ENCODE measurements at regions of chr15 and their contacts with region 1.

Region 1: GRCh38 chr15:59372352-59373211 is at the start of gene MYO1E:
- DNase-seq: peak; percentile 97
- H3K4me3 ChIP-seq: peak within 1 kb of the TSS; percentile 88 to 92
- H3K27ac ChIP-seq: peak within 1 kb of the TSS; percentile 93 to 98
- H3K4me1 ChIP-seq: no peaks in the 10 kb centered on the region
- H3K27me3 ChIP-seq: no peaks in the 10 kb centered on the region
- CTCF ChIP-seq: no peak
- POLR2A ChIP-seq: peak; percentile 98
- total RNA-seq, gene MYO1E: 66.3 to 92.0 TPM

Region 2: DNA sequence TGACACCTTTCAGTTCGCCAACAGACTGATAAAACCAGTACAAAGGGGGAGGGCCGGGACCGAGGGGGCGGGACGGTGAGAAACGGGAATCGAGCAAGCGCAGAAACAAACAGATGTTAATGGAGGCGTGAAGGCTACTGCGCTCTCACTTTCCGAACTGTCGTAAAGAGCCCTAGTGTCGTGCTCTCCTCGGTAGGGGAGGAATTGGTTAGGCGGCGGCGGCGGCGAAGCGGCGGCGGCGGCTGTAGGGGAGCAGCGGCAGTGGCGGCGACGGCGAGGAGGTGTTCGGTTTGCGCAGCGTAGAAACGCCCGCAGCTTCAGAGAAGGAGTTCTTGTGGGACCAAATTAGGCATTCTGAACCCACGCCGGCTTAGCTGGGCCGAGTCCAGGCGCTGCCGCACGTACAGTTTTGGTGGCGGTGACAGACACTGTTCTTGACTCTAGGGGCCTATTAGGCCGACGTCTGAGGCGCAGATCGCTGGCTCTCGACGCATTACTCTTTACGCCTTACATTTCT is 385.0 kb before region 1 on chr15 and contains the start of gene RNF111:
- intact Hi-C with region 1: loop called (anchors 5 kb)
- DNase-seq: peak; percentile 91
- H3K4me3 ChIP-seq: peak within 1 kb of the TSS; percentile 79 to 94
- H3K27ac ChIP-seq: peak within 1 kb of the TSS; percentile 90 to 96
- H3K4me1 ChIP-seq: peaks cover 8% of the 10 kb centered on the region
- H3K27me3 ChIP-seq: no peaks in the 10 kb centered on the region
- CTCF ChIP-seq: peak in 1 of 4 experiments; percentile 8
- POLR2A ChIP-seq: peak; percentile 77
- total RNA-seq, gene RNF111: 15.4 to 22.5 TPM

Region 3: GRCh38 chr15:59221511-59222505 is 150.8 kb before region 1 on chr15:
- intact Hi-C with region 1: no loop called
- DNase-seq: no peak
- H3K4me3 ChIP-seq: no peak overlapping the region
- H3K27ac ChIP-seq: no peak overlapping the region
- H3K4me1 ChIP-seq: no peaks in the 10 kb centered on the region
- H3K27me3 ChIP-seq: no peaks in the 10 kb centered on the region
- CTCF ChIP-seq: no peak
- POLR2A ChIP-seq: no peak

Region 4: GRCh38 chr15:59247364-59247763 is 125.2 kb before region 1 on chr15:
- intact Hi-C with region 1: loop called (anchors 5 kb)
- DNase-seq: peak; percentile 43
- H3K4me3 ChIP-seq: no peak overlapping the region
- H3K27ac ChIP-seq: no peak overlapping the region
- H3K4me1 ChIP-seq: no peaks in the 10 kb centered on the region
- H3K27me3 ChIP-seq: no peaks in the 10 kb centered on the region
- CTCF ChIP-seq: peak in 3 of 4 experiments; percentile 41 to 65 (median 49)
- POLR2A ChIP-seq: no peak

Region 5: GRCh38 chr15:59688841-59689625 is 316.5 kb after region 1 on chr15 and contains the start of gene BNIP2:
- intact Hi-C with region 1: loop called (anchors 5 kb)
- DNase-seq: peak; percentile 98
- H3K4me3 ChIP-seq: peak within 1 kb of the TSS; percentile 78 to 85
- H3K27ac ChIP-seq: peak within 1 kb of the TSS; percentile 98 to 99
- H3K4me1 ChIP-seq: peaks cover 4% of the 10 kb centered on the region
- H3K27me3 ChIP-seq: no peaks in the 10 kb centered on the region
- CTCF ChIP-seq: peak in 1 of 4 experiments; percentile 8
- POLR2A ChIP-seq: peak; percentile 90
- total RNA-seq, gene BNIP2: 76.6 to 124 TPM

Region 6: DNA sequence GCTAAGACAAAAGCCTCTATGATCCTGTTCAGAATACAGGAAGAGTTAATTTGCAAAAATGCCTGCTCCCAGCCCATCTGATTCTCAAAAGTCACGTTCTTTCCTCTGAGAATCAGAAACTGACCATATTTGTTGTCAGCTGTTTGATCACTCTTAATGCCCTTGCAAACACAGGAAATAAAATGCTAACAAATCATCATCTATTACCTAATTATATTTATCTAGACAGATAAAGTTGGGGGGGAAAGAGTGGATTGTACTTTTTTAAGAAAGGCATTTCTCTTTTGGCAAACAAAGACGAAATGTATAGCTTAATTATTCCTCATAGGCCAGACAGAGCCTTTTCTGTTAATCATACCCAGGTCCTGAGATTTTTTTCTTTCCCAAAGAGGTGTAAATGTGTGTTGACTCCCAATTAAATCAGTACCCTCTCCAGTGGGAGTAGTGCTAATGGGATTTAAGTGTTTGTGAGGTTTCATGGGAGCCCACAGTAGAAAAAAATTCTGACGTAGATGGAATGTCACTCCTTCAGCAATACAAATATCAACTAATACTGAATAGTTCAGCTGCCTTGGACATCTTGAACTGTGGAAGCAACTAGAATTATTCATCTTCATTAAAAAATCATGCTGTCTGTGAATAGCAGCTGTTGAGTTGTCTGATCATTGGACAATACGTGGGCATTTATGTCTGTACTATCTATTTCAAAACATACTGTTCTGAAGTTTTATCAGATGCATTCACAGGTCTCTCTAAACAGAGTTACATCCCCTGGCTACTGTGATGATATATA is 339.1 kb after region 1 on chr15:
- intact Hi-C with region 1: no loop called
- DNase-seq: no peak
- H3K4me3 ChIP-seq: no peak overlapping the region
- H3K27ac ChIP-seq: no peak overlapping the region
- H3K4me1 ChIP-seq: no peaks in the 10 kb centered on the region
- H3K27me3 ChIP-seq: no peaks in the 10 kb centered on the region
- CTCF ChIP-seq: no peak
- POLR2A ChIP-seq: no peak

Measured in prostate gland (tissue), 2 donors.